ENCODE measurements at regions of chr19 and their contacts with region 1.

Region 1: GRCh38 chr19:35995048-35995993 is at the start of gene SDHAF1:
- DNase-seq: peak; percentile 96
- ATAC-seq: peak; percentile 64
- H3K4me3 Mint-ChIP-seq: peak within 1 kb of the TSS; percentile 86
- H3K27ac Mint-ChIP-seq: peak within 1 kb of the TSS; percentile 94
- H3K4me1 Mint-ChIP-seq: peaks cover 14% of the 10 kb centered on the region
- H3K27me3 Mint-ChIP-seq: peaks cover 3% of the 10 kb centered on the region
- CTCF ChIP-seq: no peak
- total RNA-seq, gene SDHAF1: 19.5 to 20.8 TPM (median 20.4 TPM) in 3 replicates

Region 2: DNA sequence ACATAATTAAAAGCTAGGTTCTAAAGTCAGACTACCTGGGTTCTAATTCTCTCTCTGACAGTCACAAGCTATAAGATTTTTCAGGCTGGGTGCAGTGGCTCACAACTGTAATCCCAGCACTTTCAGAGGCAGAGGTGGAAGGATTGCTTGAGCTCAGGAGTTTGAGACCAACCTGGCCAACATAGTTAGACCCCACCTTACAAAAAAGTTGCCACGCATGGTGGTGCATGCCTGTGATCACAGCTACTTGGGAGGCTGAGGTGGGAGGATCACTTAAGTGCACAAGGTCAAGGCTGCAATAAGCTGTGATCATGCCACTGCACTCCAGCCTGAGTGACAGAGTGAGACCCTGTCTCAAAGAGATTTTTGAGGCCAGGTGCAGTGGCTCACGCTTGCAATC is 101.0 kb before region 1 on chr19:
- CTCF ChIA-PET with region 1: no interaction called
- POLR2A ChIA-PET with region 1: no interaction called
- DNase-seq: no peak
- ATAC-seq: no peak
- H3K4me3 Mint-ChIP-seq: no peak overlapping the region
- H3K27ac Mint-ChIP-seq: no peak overlapping the region
- H3K4me1 Mint-ChIP-seq: no peaks in the 10 kb centered on the region
- H3K27me3 Mint-ChIP-seq: no peaks in the 10 kb centered on the region
- CTCF ChIP-seq: no peak

Region 3: GRCh38 chr19:36009220-36009619 is 13.9 kb after region 1 on chr19:
- CTCF ChIA-PET with region 1: interaction called, 13 read pairs
- POLR2A ChIA-PET with region 1: interaction called, 8 read pairs
- DNase-seq: peak; percentile 74
- ATAC-seq: peak; percentile 10
- H3K4me3 Mint-ChIP-seq: peak overlapping the region; percentile 91
- H3K27ac Mint-ChIP-seq: peak overlapping the region; percentile 49; the same call in 1 of the 2 replicates
- H3K4me1 Mint-ChIP-seq: peaks cover 26% of the 10 kb centered on the region
- H3K27me3 Mint-ChIP-seq: peaks cover 16% of the 10 kb centered on the region
- CTCF ChIP-seq: no peak

Region 4: DNA sequence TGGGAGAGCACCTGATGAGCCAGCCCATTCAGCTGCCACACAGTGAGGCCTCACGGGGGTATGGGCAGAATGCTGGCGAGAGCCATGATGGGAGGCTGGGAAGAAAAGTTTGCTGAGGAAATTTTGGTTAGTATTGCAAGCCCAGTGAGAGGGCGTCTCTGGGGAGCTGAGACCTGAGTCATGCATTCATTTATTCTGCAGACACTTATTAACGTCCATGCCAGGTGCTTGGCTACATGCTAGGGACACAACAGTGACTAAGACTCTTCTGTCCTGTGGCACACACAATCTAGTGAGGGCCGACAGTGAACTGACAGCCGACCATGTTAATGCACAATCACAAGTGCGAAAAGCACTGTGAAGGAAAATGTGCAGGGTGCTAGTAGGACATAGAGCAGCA is 86.6 kb after region 1 on chr19:
- CTCF ChIA-PET with region 1: interaction called, 10 read pairs
- POLR2A ChIA-PET with region 1: no interaction called
- DNase-seq: no peak
- ATAC-seq: no peak
- H3K4me3 Mint-ChIP-seq: no peak overlapping the region
- H3K27ac Mint-ChIP-seq: no peak overlapping the region
- H3K4me1 Mint-ChIP-seq: no peaks in the 10 kb centered on the region
- H3K27me3 Mint-ChIP-seq: no peaks in the 10 kb centered on the region
- CTCF ChIP-seq: no peak

Measured in WTC11 (cell line).